Vagina (tissue), 2 donors: ENCODE measurements at regions of chr14 and their contacts with region 1.

Region 1: DNA sequence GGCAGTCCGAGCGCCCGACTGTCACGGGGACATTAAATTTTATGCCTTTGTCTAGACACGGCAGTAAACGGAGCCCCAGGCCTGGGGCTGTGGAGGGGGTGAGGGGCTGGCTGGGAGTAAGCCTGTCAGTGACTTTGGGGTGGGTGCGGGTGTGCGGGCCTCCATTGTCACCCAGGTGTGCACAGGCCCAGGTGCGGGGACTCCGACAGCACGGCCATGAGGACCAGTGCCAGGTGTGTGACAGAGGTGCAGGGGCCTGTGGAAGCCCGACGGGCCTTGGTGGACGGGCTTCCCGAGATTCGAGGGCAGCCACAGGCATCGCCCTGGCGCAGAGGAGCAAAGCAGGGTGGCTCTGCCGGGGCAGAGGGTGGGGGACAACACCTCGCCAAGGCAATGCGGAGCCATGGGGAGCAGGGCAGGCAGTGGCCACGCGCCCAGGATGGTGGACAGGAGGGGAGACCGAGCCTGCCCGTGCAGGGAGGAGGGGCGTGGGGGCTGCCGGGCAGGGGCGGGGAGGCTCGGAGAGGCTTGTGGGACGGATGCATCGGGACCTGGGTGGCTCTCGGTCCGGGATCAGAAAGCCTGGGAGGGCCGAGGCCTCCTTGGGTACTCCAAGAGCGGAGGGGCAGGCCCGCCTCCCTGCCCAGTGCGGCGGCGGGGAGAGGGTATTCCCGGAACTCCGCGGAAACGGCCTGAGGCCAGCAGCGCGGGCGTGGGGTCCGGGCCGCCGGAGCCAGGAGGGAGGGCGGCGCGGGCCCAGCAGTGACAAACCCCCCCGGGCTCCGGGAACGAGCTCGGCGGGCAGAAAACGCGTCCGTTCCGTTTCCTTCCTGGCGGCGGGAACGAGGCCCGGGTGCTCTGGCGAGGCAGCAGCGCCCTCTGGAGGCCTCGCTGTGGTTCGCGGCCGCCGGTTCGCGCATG is 1.5 kb downstream of the TMEM121 start:
- DNase-seq: no peak
- H3K4me3 ChIP-seq: peak overlapping the region; percentile 67 to 76
- H3K27ac ChIP-seq: peak overlapping the region; percentile 56
- H3K4me1 ChIP-seq: peaks cover 30% of the 10 kb centered on the region
- H3K27me3 ChIP-seq: no peaks in the 10 kb centered on the region
- CTCF ChIP-seq: peak; percentile 71 to 88 (median 74)
- POLR2A ChIP-seq: no peak

Region 2: DNA sequence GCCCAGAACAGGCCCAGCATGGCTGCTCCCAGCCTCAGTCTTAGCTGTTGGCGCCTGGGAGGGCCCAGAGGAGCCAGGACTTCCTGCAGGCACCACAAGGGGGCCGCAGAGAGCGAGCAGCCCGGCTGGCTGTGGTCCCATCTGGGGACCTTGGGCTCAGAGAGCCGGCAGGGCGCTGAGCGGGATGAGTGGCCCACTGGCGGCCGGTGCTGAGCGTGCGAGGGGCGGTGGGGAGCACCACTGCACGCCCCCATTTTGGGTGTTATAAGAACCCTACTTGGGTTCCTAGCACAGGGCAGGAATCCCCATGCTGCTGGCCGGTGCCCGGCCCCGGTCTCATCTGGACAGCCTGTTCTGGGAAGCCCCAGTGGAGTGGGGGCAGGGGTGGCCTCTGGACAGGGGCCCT is 79.2 kb before region 1 on chr14:
- intact Hi-C with region 1: loop called (anchors 10 kb)
- DNase-seq: no peak
- H3K4me3 ChIP-seq: no peak overlapping the region
- H3K27ac ChIP-seq: no peak overlapping the region
- H3K4me1 ChIP-seq: peaks cover 12% of the 10 kb centered on the region
- H3K27me3 ChIP-seq: no peaks in the 10 kb centered on the region
- CTCF ChIP-seq: peak; percentile 66 to 78 (median 66)
- POLR2A ChIP-seq: no peak